ENCODE measurements at regions of chr4 and their contacts with region 1.

Region 1: GRCh38 chr4:184649026-184649970 is at the starts of genes CASP3 and PRIMPOL:
- DNase-seq: peak; percentile 93 to 98 (median 95)
- ATAC-seq: peak; percentile 90
- H3K4me3 ChIP-seq: peak within 1 kb of the TSS; percentile 95 to 98
- H3K4me3 Mint-ChIP-seq: peak within 1 kb of the TSS; percentile 94
- H3K27ac ChIP-seq: peak within 1 kb of the TSS; percentile 77 to 87
- H3K27ac Mint-ChIP-seq: peak within 1 kb of the TSS; percentile 96
- H3K4me1 ChIP-seq: peaks cover 43% of the 10 kb centered on the region
- H3K4me1 Mint-ChIP-seq: peaks cover 54% of the 10 kb centered on the region
- H3K27me3 ChIP-seq: no peaks in the 10 kb centered on the region
- H3K27me3 Mint-ChIP-seq: no peaks in the 10 kb centered on the region
- CTCF ChIP-seq: no peak
- total RNA-seq, gene CASP3: 14.4 to 15.7 TPM
- total RNA-seq, gene PRIMPOL: 6.0 to 7.3 TPM

Region 2: GRCh38 chr4:183444214-183445066 is 1204.9 kb before region 1 on chr4 and contains the start of gene CDKN2AIP:
- CTCF ChIA-PET with region 1: no interaction called
- POLR2A ChIA-PET with region 1: no interaction called
- intact Hi-C with region 1: loop called in 1 of 2 experiments (anchors 5 kb)
- DNase-seq: peak; percentile 90 to 98 (median 93)
- ATAC-seq: peak; percentile 85
- H3K4me3 ChIP-seq: peak within 1 kb of the TSS; percentile 84 to 92
- H3K4me3 Mint-ChIP-seq: peak within 1 kb of the TSS; percentile 98
- H3K27ac ChIP-seq: peak within 1 kb of the TSS; percentile 84 to 91
- H3K27ac Mint-ChIP-seq: peak within 1 kb of the TSS; percentile 99
- H3K4me1 ChIP-seq: peaks cover 43% of the 10 kb centered on the region
- H3K4me1 Mint-ChIP-seq: peaks cover 59% of the 10 kb centered on the region
- H3K27me3 ChIP-seq: no peaks in the 10 kb centered on the region
- H3K27me3 Mint-ChIP-seq: no peaks in the 10 kb centered on the region
- CTCF ChIP-seq: no peak
- total RNA-seq, gene CDKN2AIP: 51.2 to 51.9 TPM

Region 3: GRCh38 chr4:184417802-184418511 is 231.3 kb before region 1 on chr4:
- CTCF ChIA-PET with region 1: no interaction called
- POLR2A ChIA-PET with region 1: no interaction called
- intact Hi-C with region 1: loop called (anchors 5 kb)
- DNase-seq: peak in 3 of 9 experiments; percentile 14 to 68 (median 53)
- ATAC-seq: peak; percentile 71
- H3K4me3 ChIP-seq: peak overlapping the region in 1 of 2 experiments; percentile 44
- H3K4me3 Mint-ChIP-seq: peak overlapping the region; percentile 73
- H3K27ac ChIP-seq: peak overlapping the region; percentile 61 to 80
- H3K27ac Mint-ChIP-seq: peak overlapping the region; percentile 98
- H3K4me1 ChIP-seq: peaks cover 33% of the 10 kb centered on the region
- H3K4me1 Mint-ChIP-seq: peaks cover 71% of the 10 kb centered on the region
- H3K27me3 ChIP-seq: no peaks in the 10 kb centered on the region
- H3K27me3 Mint-ChIP-seq: no peaks in the 10 kb centered on the region
- CTCF ChIP-seq: no peak

Region 4: DNA sequence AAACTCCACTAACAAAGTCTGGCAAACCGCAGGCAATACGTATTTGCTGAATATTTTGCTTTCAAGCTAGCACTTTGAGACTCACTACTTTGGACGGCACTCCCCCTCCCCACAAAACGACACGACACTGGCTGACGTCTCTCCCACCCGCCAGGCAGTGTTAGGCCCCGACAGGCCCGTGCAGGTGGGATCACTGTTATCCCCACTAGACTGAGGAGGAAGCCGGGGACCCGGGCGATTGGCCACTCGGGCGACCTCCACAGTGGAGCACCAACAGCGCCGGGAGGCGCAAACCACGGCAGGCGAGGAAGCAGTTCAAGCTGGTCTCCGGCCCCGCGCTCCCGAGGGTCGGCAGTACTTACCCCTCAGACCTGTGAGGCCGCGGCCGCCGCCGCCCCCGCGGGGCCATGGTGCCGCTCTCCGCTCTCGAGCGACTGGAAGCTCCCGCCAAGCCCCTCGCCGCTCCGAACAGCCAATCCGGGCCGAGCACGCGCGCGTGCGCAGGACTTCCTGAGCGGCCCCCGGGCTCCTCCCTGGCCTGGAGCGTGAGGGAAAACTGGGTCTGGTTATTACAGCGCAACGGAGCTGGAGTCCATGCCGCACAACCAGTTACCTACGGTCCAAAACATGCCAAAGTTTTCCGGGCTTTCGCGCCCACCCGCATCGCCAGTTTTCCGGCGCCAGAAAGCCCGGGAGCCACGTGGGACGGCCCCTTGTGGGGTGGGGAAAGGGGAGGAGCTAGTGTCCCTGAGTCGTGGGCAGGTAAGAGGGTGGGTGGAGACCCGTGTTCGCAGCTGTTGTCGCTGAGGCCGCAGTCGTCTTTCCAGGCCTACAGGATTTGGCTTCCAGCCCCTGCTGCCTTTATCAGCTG is 84.6 kb after region 1 on chr4 and contains the start of gene CENPU:
- CTCF ChIA-PET with region 1: no interaction called
- POLR2A ChIA-PET with region 1: interaction called, 22 read pairs
- intact Hi-C with region 1: loop called (anchors 1 kb)
- DNase-seq: peak; percentile 87 to 97 (median 94)
- ATAC-seq: peak; percentile 95
- H3K4me3 ChIP-seq: peak within 1 kb of the TSS; percentile 74 to 79
- H3K4me3 Mint-ChIP-seq: peak within 1 kb of the TSS; percentile 87
- H3K27ac ChIP-seq: peak within 1 kb of the TSS; percentile 2 to 43
- H3K27ac Mint-ChIP-seq: peak within 1 kb of the TSS; percentile 84
- H3K4me1 ChIP-seq: peaks cover 8% of the 10 kb centered on the region
- H3K4me1 Mint-ChIP-seq: peaks cover 18% of the 10 kb centered on the region
- H3K27me3 ChIP-seq: no peaks in the 10 kb centered on the region
- H3K27me3 Mint-ChIP-seq: no peaks in the 10 kb centered on the region
- CTCF ChIP-seq: no peak
- total RNA-seq, gene CENPU: 3.4 TPM

Region 5: DNA sequence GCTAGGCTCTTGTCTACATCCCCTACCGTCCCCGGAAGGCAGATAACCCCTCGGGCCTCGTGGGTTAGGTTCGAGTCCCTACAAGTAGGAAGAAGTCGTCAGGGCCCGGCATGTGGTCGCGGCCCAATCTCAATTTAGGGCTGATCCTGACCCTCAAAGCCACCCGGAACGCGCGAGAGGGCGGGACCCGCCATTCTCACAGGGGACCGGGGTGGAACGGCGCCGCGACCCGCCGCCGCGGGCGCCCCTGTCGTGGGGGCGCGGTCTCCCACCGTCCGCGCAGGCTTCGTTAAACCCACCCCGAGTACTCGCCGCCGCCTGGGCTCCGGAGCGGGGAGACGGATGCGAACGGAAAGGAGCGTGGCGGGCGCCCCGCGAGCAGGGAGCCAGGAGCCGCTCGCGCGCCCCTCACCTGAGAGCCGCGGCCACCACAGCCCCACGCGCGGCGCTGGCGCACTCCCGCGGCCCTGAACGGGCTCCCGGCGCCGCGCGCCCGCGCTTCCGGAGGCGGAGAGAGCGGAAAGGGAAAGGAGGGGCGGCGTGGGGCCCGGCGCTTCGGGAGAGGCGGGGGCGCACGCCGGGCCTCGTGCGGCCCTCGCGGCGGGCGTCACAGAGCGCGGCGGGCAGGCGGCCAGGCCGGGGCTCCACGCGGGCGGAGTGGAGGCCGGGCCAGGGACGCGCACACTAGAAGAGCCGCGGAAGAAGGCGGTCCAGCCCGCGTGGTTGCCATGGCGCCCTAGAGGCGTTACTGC is 554.4 kb after region 1 on chr4 and contains the start of gene CFAP97:
- CTCF ChIA-PET with region 1: no interaction called
- POLR2A ChIA-PET with region 1: no interaction called
- intact Hi-C with region 1: loop called (anchors 2 to 5 kb)
- DNase-seq: peak; percentile 67 to 95 (median 82)
- ATAC-seq: peak; percentile 79
- H3K4me3 ChIP-seq: peak within 1 kb of the TSS; percentile 64 to 83
- H3K4me3 Mint-ChIP-seq: peak within 1 kb of the TSS; percentile 91
- H3K27ac ChIP-seq: peak within 1 kb of the TSS; percentile 83 to 87
- H3K27ac Mint-ChIP-seq: peak within 1 kb of the TSS; percentile 98
- H3K4me1 ChIP-seq: peaks cover 29% of the 10 kb centered on the region
- H3K4me1 Mint-ChIP-seq: peaks cover 49% of the 10 kb centered on the region
- H3K27me3 ChIP-seq: no peaks in the 10 kb centered on the region
- H3K27me3 Mint-ChIP-seq: no peaks in the 10 kb centered on the region
- CTCF ChIP-seq: no peak
- total RNA-seq, gene CFAP97: 18.8 to 20.4 TPM

Region 6: DNA sequence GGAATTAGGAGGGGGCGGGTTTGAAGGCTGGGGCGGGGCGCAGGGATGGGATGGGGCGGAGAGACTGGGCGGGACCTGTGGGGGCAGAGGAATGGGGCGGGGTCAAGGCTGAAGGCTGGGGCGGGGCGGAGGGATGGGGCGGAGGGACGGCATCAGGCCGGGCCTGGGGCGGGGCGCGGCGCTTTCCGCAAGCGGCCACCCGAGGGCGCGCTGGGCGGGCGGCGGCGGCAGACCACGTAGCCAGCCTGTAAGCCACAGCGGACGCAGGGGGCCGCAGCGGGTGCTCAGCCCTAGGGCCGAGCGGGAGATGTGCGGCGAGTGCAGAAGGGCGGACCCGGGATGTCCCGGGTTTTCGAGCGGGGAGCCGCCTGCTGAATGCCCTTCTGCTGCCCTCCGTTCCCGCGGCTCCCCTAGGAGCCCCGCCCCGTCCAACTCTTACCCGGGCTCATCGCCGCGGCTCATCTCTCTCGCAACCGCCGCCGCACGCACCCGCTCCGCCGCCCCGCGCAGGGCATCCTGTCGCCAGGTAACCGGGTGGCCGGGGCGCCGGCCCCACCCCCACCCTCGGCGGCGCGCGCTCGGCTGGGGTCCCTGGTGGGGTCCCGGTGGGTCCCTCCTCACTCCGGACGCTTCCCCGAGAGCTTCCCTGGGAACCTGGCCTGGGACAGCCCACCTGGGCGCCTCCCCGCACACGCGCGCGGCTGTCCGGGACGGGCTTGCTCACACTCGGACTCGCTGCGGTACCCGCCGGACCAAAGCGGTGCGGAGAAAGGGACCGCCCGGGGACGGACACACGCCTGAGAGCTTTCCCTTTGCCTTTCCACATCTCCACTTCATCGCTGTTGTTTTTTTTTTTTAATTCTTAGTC is 822.2 kb after region 1 on chr4 and contains the start of gene CCDC110:
- CTCF ChIA-PET with region 1: no interaction called
- POLR2A ChIA-PET with region 1: no interaction called
- intact Hi-C with region 1: loop called in 1 of 2 experiments (anchors 5 kb)
- DNase-seq: peak; percentile 79 to 96 (median 88)
- ATAC-seq: peak; percentile 95
- H3K4me3 ChIP-seq: peak within 1 kb of the TSS; percentile 60 to 85
- H3K4me3 Mint-ChIP-seq: peak within 1 kb of the TSS; percentile 93
- H3K27ac ChIP-seq: peak within 1 kb of the TSS; percentile 27 to 34
- H3K27ac Mint-ChIP-seq: peak within 1 kb of the TSS; percentile 67
- H3K4me1 ChIP-seq: peaks cover 13% of the 10 kb centered on the region
- H3K4me1 Mint-ChIP-seq: peaks cover 16% of the 10 kb centered on the region
- H3K27me3 ChIP-seq: no peaks in the 10 kb centered on the region
- H3K27me3 Mint-ChIP-seq: peaks cover 2% of the 10 kb centered on the region
- CTCF ChIP-seq: peak; percentile 64
- total RNA-seq, gene CCDC110: 0.57 TPM in 1 of 2 experiments, not detected in the other

Measured in CD8-positive, alpha-beta T cell (primary cell).